Activated CD4-positive, alpha-beta T cell treated with anti-CD3 and anti-CD28 coated beads, Interleukin-2, amount 10 ng/mL, durations not matched to agents 24 days and 14 days (primary cell): ENCODE measurements at regions of chr10 and their contacts with region 1.

Region 1: GRCh38 chr10:119872860-119873681 is 428 bp upstream of the MCMBP start:
- DNase-seq: peak; percentile 96
- H3K4me3 Mint-ChIP-seq: peak overlapping the region; percentile 84
- H3K27ac Mint-ChIP-seq: peak overlapping the region; percentile 91
- H3K4me1 Mint-ChIP-seq: peaks cover 29% of the 10 kb centered on the region
- H3K27me3 Mint-ChIP-seq: no peaks in the 10 kb centered on the region

Region 2: DNA sequence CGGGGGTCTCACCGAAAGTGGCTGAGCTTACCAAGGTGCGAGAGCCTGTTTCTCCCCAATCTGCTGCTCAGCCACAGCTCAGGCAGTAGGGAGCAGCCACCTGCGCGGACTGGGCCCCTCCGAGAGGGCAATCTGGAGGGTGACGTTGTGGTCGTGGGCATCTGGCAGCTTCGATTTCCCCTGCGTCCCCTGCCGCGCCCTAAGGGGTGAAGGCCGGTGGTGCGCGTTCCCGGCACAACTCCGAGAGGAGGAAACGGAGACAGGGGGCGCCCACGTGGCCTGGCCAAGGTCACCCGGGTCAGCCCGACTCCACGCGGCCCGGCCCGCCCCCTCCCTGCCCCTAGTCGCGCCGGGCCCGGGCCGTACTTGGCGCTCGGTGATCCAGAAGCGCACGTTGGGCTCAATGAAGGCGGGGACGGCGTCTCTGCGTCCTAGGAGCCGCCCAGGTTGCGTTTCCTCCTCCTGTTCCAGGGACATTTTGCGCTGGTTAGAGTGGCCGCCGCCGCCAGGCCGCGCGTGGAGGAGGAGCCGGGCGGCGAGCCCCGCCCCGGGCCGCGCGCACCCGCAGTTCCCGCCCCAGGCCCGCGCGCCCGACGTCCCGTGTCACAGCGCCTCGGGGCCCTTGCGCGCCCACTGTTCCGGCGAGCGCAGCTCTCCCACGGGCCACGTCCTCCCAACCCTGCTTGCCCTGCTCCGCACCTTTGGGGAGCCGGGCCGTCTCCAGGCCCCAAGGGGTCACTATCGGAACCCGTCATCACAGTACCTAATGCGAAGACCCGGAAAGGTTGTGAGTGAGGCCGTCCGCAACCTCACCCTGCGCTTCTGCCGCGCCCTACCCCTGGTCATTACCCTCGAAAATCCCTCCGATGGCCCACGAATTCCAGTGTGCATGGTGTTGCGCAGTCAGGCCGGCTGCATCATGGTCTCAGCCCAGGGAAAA is 707.6 kb before region 1 on chr10 and contains the start of gene SFXN4:
- intact Hi-C with region 1: loop called (anchors 1 kb)
- DNase-seq: peak; percentile 96
- H3K4me3 Mint-ChIP-seq: peak within 1 kb of the TSS; percentile 90
- H3K27ac Mint-ChIP-seq: peak within 1 kb of the TSS; percentile 95
- H3K4me1 Mint-ChIP-seq: peaks cover 35% of the 10 kb centered on the region
- H3K27me3 Mint-ChIP-seq: no peaks in the 10 kb centered on the region
- total RNA-seq, gene SFXN4: 58.1 and 63.0 TPM in 2 replicates

Region 3: GRCh38 chr10:119892188-119893065 is 19.4 kb after region 1 on chr10 and contains the start of gene SEC23IP:
- intact Hi-C with region 1: loop called (anchors 1 kb)
- DNase-seq: peak; percentile 98
- H3K4me3 Mint-ChIP-seq: peak within 1 kb of the TSS; percentile 98
- H3K27ac Mint-ChIP-seq: peak within 1 kb of the TSS; percentile 95
- H3K4me1 Mint-ChIP-seq: peaks cover 32% of the 10 kb centered on the region
- H3K27me3 Mint-ChIP-seq: peaks cover 2% of the 10 kb centered on the region
- total RNA-seq, gene SEC23IP: 78.0 and 90.3 TPM in 2 replicates

Region 4: GRCh38 chr10:119928411-119928810 is 55.3 kb after region 1 on chr10:
- intact Hi-C with region 1: no loop called
- DNase-seq: no peak
- H3K4me3 Mint-ChIP-seq: no peak overlapping the region
- H3K27ac Mint-ChIP-seq: no peak overlapping the region
- H3K4me1 Mint-ChIP-seq: peaks cover 7% of the 10 kb centered on the region
- H3K27me3 Mint-ChIP-seq: no peaks in the 10 kb centered on the region